Activated CD4-positive, alpha-beta memory T cell treated with anti-CD3 and anti-CD28 coated beads, Interleukin-2, amount 10 ng/mL, durations not matched to agents 7 days and 5 days (primary cell): ENCODE measurements at regions of chr11 and their contacts with region 1.

Region 1: GRCh38 chr11:96389720-96390487 is at the starts of genes CCDC82 and JRKL:
- DNase-seq: peak; percentile 98
- H3K4me3 Mint-ChIP-seq: peak within 1 kb of the TSS; percentile 85
- H3K27ac Mint-ChIP-seq: peak within 1 kb of the TSS; percentile 81
- H3K4me1 Mint-ChIP-seq: peaks cover 55% of the 10 kb centered on the region
- H3K27me3 Mint-ChIP-seq: no peaks in the 10 kb centered on the region
- total RNA-seq, gene CCDC82: 31.5 to 32.9 TPM
- total RNA-seq, gene JRKL: 11.9 to 12.0 TPM

Region 2: GRCh38 chr11:95231127-95231880 is 1158.6 kb before region 1 on chr11 and contains the start of gene SESN3:
- CTCF ChIA-PET with region 1: no interaction called
- POLR2A ChIA-PET with region 1: interaction called, 12 read pairs
- DNase-seq: peak; percentile 99
- H3K4me3 Mint-ChIP-seq: no peak within 1 kb of the TSS
- H3K27ac Mint-ChIP-seq: peak within 1 kb of the TSS; percentile 79
- H3K4me1 Mint-ChIP-seq: peaks cover 36% of the 10 kb centered on the region
- H3K27me3 Mint-ChIP-seq: peaks cover 12% of the 10 kb centered on the region
- total RNA-seq, gene SESN3: 23.2 to 24.6 TPM

Region 3: DNA sequence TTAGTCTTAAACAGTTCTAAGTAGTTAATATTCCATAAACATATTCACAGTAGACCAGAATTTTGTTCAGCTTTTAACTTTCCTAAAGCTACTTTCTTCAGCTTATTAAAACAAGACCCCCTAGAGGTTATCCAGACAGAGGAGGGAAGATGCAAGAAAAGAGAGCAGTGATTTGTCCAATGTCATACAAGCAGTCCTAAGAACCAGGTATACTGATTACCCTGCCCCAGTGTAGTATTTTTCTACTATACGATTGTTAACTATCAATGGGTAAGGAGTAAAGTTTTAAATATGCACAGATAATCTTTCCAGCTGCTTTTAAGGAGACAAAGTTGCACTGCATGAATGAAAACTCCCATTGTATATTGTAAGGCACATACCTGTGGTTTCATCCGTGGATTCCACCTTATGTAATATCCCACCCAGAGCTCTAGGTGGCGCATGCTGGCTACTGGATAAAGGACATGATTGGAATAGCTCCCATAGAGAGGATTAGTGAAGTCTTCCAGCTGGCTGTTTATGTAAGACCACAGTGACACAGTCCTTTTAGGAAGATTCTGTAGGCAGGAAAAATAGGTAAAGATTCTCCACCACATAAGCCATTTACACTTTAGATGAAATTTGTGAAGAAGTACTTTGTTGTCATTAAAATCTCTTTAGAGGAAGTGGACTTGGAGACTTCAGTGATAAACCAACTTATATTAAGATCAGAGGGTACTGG is 554.0 kb before region 1 on chr11:
- CTCF ChIA-PET with region 1: interaction called, 44 read pairs
- POLR2A ChIA-PET with region 1: interaction called, 10 read pairs
- DNase-seq: peak; percentile 57
- H3K4me3 Mint-ChIP-seq: no peak overlapping the region
- H3K27ac Mint-ChIP-seq: no peak overlapping the region
- H3K4me1 Mint-ChIP-seq: no peaks in the 10 kb centered on the region
- H3K27me3 Mint-ChIP-seq: no peaks in the 10 kb centered on the region

Region 4: GRCh38 chr11:95849087-95849825 is 540.6 kb before region 1 on chr11:
- CTCF ChIA-PET with region 1: interaction called, 26 read pairs
- POLR2A ChIA-PET with region 1: interaction called, 4 read pairs
- DNase-seq: peak; percentile 23
- H3K4me3 Mint-ChIP-seq: no peak overlapping the region
- H3K27ac Mint-ChIP-seq: no peak overlapping the region
- H3K4me1 Mint-ChIP-seq: no peaks in the 10 kb centered on the region
- H3K27me3 Mint-ChIP-seq: no peaks in the 10 kb centered on the region

Region 5: DNA sequence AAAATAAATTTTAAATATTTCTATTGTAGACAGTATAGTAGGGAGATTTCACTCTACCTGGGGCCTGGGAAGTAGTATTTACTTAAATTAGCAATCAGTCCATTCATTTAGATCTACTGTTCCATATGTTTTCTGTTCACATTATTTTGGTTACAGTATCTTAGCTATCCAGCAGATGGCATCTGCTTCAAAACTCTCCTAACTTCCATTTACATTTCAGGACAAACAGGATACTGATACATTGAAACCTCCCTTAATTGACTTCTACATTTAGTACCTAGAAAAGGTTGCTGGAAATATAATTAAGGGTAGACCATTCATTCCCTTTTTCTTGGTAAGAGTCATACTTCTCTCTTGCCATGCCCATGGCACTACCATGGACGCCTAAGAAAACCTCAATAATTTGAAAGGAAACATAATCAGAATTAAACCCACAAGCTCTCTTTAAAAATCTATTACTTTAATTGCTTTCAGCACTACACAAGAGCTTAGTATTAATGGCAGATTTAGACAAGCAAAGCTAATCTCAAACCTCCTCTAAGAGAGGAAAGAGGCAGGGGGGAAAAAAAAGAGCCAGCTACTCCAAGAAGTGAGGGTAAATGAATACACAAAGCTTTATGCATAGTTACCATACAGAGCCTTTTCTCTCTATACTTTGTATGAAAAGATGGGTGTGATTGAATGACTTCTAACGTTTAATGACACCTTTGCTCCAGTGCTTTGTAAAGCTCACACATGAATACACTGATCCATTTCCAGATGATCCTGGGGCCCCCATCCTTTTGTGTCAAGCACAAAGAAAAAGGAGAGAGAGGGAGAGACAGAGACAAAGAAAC is 334.8 kb before region 1 on chr11:
- CTCF ChIA-PET with region 1: interaction called, 22 read pairs
- POLR2A ChIA-PET with region 1: interaction called, 9 read pairs
- DNase-seq: no peak
- H3K4me3 Mint-ChIP-seq: no peak overlapping the region
- H3K27ac Mint-ChIP-seq: no peak overlapping the region
- H3K4me1 Mint-ChIP-seq: peaks cover 41% of the 10 kb centered on the region
- H3K27me3 Mint-ChIP-seq: no peaks in the 10 kb centered on the region

Region 6: DNA sequence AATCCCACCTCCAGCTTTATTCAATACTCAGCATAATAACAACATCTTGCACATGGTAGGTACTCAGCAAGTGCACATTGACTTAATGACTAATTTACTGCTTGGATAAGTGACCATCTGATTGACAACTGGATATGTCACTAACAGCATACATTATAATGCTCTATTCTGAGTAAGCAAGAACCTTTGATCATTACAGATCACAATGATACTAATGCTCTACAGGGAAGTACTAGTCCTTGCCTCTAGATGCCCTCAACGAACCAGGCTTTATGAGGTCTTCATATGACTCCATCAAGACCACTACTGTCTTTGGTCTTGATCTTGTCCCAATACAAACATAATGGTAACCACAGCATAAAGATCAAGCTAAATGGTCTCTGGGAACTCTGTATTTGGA is 298.4 kb before region 1 on chr11:
- CTCF ChIA-PET with region 1: interaction called, 10 read pairs
- POLR2A ChIA-PET with region 1: interaction called, 3 read pairs
- DNase-seq: no peak
- H3K4me3 Mint-ChIP-seq: no peak overlapping the region
- H3K27ac Mint-ChIP-seq: no peak overlapping the region
- H3K4me1 Mint-ChIP-seq: peaks cover 19% of the 10 kb centered on the region
- H3K27me3 Mint-ChIP-seq: no peaks in the 10 kb centered on the region

Region 7: GRCh38 chr11:96366024-96366423 is 23.9 kb before region 1 on chr11:
- CTCF ChIA-PET with region 1: interaction called, 3 read pairs
- POLR2A ChIA-PET with region 1: interaction called, 13 read pairs
- DNase-seq: no peak
- H3K4me3 Mint-ChIP-seq: no peak overlapping the region
- H3K27ac Mint-ChIP-seq: no peak overlapping the region
- H3K4me1 Mint-ChIP-seq: peaks cover 3% of the 10 kb centered on the region
- H3K27me3 Mint-ChIP-seq: no peaks in the 10 kb centered on the region

Region 8: GRCh38 chr11:96430668-96431067 is 40.8 kb after region 1 on chr11:
- CTCF ChIA-PET with region 1: no interaction called
- POLR2A ChIA-PET with region 1: no interaction called
- DNase-seq: no peak
- H3K4me3 Mint-ChIP-seq: no peak overlapping the region
- H3K27ac Mint-ChIP-seq: no peak overlapping the region
- H3K4me1 Mint-ChIP-seq: peaks cover 5% of the 10 kb centered on the region
- H3K27me3 Mint-ChIP-seq: peaks cover 45% of the 10 kb centered on the region